Natural killer cell (primary cell): ENCODE measurements at regions of chr12 and their contacts with region 1.

Region 1: DNA sequence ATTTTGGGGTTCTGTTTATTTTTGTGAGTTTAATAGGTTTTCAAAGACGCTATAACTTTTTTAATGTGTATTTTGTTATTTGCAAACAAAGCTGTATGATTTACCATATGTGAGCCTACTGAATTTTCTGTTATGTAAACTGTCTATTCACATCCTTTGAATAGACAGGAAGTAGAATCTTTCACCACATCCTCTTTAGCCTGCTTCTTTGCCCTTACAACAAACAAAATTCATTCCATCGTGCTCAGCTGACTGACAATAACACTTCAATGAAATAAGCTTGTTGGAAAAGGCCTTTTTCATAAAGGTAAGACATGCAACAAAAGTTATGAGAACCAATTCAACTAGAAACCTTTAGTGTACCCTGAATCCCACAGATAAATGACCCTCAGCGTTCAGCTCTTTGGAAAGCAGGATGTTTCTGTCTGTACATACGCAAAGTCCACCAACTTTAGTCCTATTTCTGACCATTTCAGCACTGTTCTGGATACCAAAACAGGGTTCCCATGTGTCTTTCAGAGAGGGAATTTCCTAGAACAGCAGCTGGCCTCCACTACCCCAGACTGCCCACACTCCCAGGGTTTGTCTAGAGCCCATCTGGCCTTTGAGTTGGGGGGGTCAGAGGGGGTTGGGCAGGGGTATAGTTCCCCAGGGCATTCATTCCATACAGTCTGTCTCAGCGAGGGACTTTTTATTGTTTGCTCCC is 71.3 kb downstream of the DUSP6 start:
- DNase-seq: peak in 1 of 2 donors; percentile 54
- ATAC-seq: peak; percentile 92 to 94 (median 93)
- H3K4me3 ChIP-seq: no peak overlapping the region
- H3K4me3 Mint-ChIP-seq: peak overlapping the region; percentile 69
- H3K27ac ChIP-seq: peak overlapping the region; percentile 74
- H3K27ac Mint-ChIP-seq: peak overlapping the region; percentile 85 to 90
- H3K4me1 ChIP-seq: peaks cover 9% of the 10 kb centered on the region
- H3K4me1 Mint-ChIP-seq: peaks cover 32 to 37% of the 10 kb centered on the region in 2 donors
- H3K27me3 ChIP-seq: no peaks in the 10 kb centered on the region
- H3K27me3 Mint-ChIP-seq: no peaks in the 10 kb centered on the region
- CTCF ChIP-seq: no peak

Region 2: GRCh38 chr12:89252284-89252683 is 28.7 kb before region 1 on chr12:
- intact Hi-C with region 1: loop called (anchors 1 kb)
- DNase-seq: peak in 1 of 2 donors; percentile 38
- ATAC-seq: peak; percentile 71 to 88 (median 79)
- H3K4me3 ChIP-seq: no peak overlapping the region
- H3K4me3 Mint-ChIP-seq: peak overlapping the region; percentile 53
- H3K27ac ChIP-seq: no peak overlapping the region
- H3K27ac Mint-ChIP-seq: peak overlapping the region; percentile 77 to 86
- H3K4me1 ChIP-seq: no peaks in the 10 kb centered on the region
- H3K4me1 Mint-ChIP-seq: peaks cover 36 to 49% of the 10 kb centered on the region in 2 donors
- H3K27me3 ChIP-seq: no peaks in the 10 kb centered on the region
- H3K27me3 Mint-ChIP-seq: peaks cover 0 to 3% of the 10 kb centered on the region in 2 donors
- CTCF ChIP-seq: no peak

Region 3: DNA sequence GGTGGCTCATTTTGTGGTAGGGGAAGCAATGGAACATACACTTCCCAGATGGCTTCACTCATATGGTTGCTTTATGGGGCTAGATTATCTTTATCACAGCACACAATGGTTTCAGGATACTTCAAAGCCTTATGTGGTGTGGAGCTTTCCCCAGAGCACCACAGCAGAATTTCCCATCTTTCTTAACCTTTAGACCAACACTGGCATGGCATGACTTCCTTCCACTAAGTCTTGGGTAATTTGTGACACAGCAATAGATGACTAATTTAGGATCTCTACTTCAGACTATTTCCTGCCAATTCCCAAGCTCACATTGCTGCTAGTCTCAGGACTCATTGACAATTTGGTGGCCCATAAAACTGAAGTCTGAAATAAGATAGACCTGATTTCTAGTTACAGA is 1938.5 kb after region 1 on chr12:
- intact Hi-C with region 1: no loop called
- DNase-seq: no peak
- ATAC-seq: no peak
- H3K4me3 ChIP-seq: no peak overlapping the region
- H3K4me3 Mint-ChIP-seq: no peak overlapping the region
- H3K27ac ChIP-seq: no peak overlapping the region
- H3K27ac Mint-ChIP-seq: no peak overlapping the region
- H3K4me1 ChIP-seq: no peaks in the 10 kb centered on the region
- H3K4me1 Mint-ChIP-seq: no peaks in the 10 kb centered on the region
- H3K27me3 ChIP-seq: peaks cover 2% of the 10 kb centered on the region
- H3K27me3 Mint-ChIP-seq: no peaks in the 10 kb centered on the region
- CTCF ChIP-seq: no peak